ENCODE measurements at regions of chr4 and their contacts with region 1.

Region 1: DNA sequence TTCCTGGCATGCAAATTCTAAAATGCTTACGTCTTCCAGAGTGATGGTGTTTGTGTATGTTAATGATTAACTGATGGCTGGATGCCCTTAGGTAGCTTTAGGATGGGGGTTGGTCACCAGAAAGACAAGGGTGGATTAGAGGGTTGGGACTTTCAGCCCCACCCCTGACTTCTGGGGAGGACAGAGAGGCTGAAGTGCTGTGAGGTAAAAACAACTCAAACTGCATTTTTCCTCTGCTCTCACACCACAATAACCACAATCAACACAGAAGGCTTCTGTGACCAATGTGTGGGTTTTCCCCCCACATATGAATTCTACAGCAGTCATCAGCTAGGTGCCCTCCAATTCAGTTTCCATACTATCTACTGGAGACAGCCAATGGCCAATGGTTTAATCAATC is 18.7 kb upstream of the DDIT4L start:
- DNase-seq: no peak
- ATAC-seq: no peak
- H3K4me3 ChIP-seq: no peak overlapping the region
- H3K27ac ChIP-seq: no peak overlapping the region
- H3K4me1 ChIP-seq: no peaks in the 10 kb centered on the region
- H3K27me3 ChIP-seq: peaks cover 0 to 6% (median 0%) of the 10 kb centered on the region in 7 donors
- CTCF ChIP-seq: no peak

Region 2: DNA sequence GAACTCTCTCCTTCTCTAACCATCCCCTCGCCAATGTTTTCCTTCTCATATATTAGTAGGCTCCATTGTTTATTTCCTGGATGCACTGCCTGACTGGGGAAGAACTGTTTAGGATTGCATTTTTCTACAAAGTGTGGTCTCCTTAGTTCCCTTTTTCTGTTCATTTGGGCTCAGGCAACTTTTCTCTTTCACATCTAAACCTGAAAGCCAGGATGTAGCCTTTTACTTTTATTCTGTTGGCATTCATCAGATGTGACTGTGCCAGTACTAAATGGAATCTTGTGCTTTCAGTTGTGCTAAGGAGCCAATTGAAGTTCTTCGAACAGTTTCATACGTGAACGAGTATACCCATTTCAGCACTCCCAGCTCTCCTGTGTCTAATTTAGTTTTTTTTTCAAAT is 78.5 kb before region 1 on chr4:
- intact Hi-C with region 1: no loop called
- DNase-seq: no peak
- ATAC-seq: no peak
- H3K4me3 ChIP-seq: no peak overlapping the region
- H3K27ac ChIP-seq: no peak overlapping the region
- H3K4me1 ChIP-seq: peaks cover 0 to 7% (median 0%) of the 10 kb centered on the region in 9 donors
- H3K27me3 ChIP-seq: no peaks in the 10 kb centered on the region
- CTCF ChIP-seq: no peak

Region 3: GRCh38 chr4:100414016-100414790 is 205.2 kb after region 1 on chr4:
- intact Hi-C with region 1: loop called in 1 of 10 experiments (anchors 10 kb)
- DNase-seq: no peak
- ATAC-seq: no peak
- H3K4me3 ChIP-seq: no peak overlapping the region
- H3K27ac ChIP-seq: no peak overlapping the region
- H3K4me1 ChIP-seq: no peaks in the 10 kb centered on the region
- H3K27me3 ChIP-seq: no peaks in the 10 kb centered on the region
- CTCF ChIP-seq: no peak